Transverse colon (tissue), 4 donors: ENCODE measurements at regions of chr3 and their contacts with region 1.

Region 1: DNA sequence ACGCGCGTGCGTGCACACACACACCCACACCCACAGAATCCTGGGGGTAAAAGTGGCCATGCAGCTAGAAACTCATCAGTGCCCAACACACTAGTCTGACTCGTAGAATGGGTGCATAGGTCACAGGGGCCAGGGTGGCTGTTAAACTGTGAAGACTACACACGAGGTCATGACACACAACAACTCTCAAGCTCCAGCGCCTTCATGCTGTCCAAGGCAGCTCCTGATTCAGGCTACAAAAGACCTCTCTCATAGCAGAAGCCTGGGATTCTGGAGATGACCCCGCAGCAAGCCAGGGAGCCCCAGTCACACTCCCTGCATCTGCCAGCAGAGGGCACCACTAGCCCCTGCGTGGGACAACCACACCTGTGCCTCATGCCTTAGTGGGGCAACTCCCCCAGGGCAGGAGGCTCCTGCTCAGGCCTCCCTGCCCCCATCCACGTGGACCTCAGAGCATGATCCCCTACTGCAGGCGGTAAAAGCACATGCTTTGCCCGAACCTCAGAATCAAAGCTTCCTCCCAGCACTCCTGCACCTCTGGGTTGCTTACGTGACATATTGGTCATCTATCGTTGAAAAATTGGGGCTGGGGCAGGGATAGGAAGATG is 93.1 kb downstream of the LRIG1 start:
- DNase-seq: peak; percentile 79
- H3K4me3 ChIP-seq: no peak overlapping the region
- H3K27ac ChIP-seq: peak overlapping the region; percentile 46 to 87 (median 70)
- H3K4me1 ChIP-seq: peaks cover 8 to 57% (median 39%) of the 10 kb centered on the region in 4 donors
- H3K27me3 ChIP-seq: no peaks in the 10 kb centered on the region
- CTCF ChIP-seq: peak; percentile 87 to 90 (median 89)
- EP300 ChIP-seq: no peak
- POLR2A ChIP-seq: no peak

Region 2: GRCh38 chr3:66816090-66816761 is 408.5 kb after region 1 on chr3:
- in situ Hi-C with region 1: loop called (anchors 5 to 25 kb)
- intact Hi-C with region 1: loop called (anchors 5 kb)
- DNase-seq: no peak
- H3K4me3 ChIP-seq: no peak overlapping the region
- H3K27ac ChIP-seq: peak overlapping the region in 1 of 4 donors; percentile 18
- H3K4me1 ChIP-seq: peaks cover 0 to 13% (median 0%) of the 10 kb centered on the region in 4 donors
- H3K27me3 ChIP-seq: no peaks in the 10 kb centered on the region
- CTCF ChIP-seq: peak; percentile 57 to 81 (median 71)
- EP300 ChIP-seq: no peak
- POLR2A ChIP-seq: no peak

Region 3: DNA sequence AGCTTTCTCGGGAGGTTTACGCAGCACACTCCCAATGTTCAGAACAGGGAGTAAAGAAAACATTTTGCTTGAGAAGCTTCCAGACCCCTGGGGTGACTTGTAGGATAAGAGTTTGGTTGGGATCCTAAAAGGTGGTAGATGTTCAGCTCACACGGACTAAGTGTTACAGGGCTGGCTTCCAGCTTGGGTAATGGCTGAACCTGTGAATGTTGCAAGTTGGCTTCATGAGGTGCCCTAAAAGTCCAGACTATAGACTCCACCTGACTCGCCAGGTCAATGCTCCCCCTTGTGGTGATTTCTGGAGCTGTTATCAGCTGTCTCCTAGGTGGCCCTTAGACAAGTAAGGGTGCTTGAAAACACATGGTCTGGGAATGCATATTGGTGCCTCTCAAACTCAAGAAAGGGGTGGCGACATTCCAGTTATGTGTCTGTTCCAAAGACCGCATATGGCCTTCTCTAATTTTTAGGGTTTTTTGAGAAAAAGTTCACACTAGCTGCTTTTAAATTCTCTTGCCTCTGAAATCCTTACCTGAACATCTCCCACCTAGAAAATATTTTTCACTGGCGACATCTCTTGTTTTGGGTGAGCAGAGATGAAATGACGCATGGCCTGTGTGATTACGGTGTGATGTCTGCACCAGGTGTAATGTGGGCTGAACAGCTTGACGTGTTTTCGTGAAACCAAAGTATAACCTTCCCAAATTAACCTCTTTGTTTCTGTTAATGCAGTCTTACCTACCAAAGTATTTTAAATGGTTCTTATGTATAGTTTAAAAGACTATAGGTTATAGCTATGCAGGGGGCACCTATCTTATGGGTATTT is 414.7 kb after region 1 on chr3:
- in situ Hi-C with region 1: loop called (anchors 5 to 25 kb)
- intact Hi-C with region 1: loop called (anchors 5 kb)
- DNase-seq: peak; percentile 76
- H3K4me3 ChIP-seq: no peak overlapping the region
- H3K27ac ChIP-seq: no peak overlapping the region
- H3K4me1 ChIP-seq: no peaks in the 10 kb centered on the region
- H3K27me3 ChIP-seq: no peaks in the 10 kb centered on the region
- CTCF ChIP-seq: peak; percentile 72 to 77 (median 74)
- EP300 ChIP-seq: no peak
- POLR2A ChIP-seq: no peak